Activated T-helper 2 cell treated with anti-CD3 and anti-CD28 coated beads, Interferon-gamma antibody, Interleukin-2, Interleukin-4, amounts not matched to agents 10 μg/mL and 5 μg/mL and 100 μg/mL, durations not matched to agents 14 hours and 24 hours and 36 hours (primary cell): ENCODE measurements at regions of chr14 and their contacts with region 1.

Region 1: GRCh38 chr14:24806061-24806678 is 172.2 kb upstream of the GZMB start:
- DNase-seq: no peak
- H3K4me3 Mint-ChIP-seq: no peak overlapping the region
- H3K27ac Mint-ChIP-seq: no peak overlapping the region
- H3K4me1 Mint-ChIP-seq: no peaks in the 10 kb centered on the region
- H3K27me3 Mint-ChIP-seq: peaks cover 10% of the 10 kb centered on the region

Region 2: DNA sequence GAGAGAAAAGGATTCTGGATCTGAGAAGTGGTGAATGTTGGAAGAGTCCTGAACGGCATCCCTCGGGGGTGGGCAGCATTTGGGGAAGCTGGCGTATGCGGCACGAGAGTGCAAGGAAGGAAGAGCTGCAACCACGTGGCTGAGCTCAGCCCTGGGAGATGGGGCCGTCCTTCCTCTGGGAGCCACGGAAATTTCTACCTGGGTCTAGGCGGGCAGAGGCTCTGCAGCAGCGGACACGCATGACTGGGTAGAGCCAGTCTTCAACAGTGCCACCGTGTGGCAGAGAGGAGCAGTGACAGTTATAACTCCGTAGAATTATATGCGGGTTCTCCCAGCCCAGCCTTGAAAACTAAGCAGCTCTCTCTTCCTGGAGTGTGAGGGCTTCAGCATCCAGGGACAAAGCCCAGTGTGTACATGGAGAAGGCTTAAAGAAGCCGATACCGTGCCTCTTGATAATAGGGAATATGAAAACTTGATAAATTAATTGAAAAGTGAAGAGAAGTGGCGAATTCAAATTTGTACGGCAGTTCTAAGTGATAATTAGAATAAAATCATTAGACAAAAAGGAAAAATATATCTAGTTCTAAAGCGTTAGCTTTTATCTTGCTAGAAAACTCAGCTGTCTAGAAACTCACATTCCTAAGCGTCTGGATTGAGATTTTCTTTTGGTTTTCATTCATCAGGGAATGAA is 326.7 kb after region 1 on chr14:
- intact Hi-C with region 1: loop called (anchors 1 kb)
- DNase-seq: peak; percentile 27
- H3K4me3 Mint-ChIP-seq: no peak overlapping the region
- H3K27ac Mint-ChIP-seq: no peak overlapping the region
- H3K4me1 Mint-ChIP-seq: no peaks in the 10 kb centered on the region
- H3K27me3 Mint-ChIP-seq: peaks cover 20% of the 10 kb centered on the region

Region 3: GRCh38 chr14:25400607-25401206 is 594.5 kb after region 1 on chr14:
- intact Hi-C with region 1: loop called (anchors 10 kb)
- DNase-seq: peak; percentile 11
- H3K4me3 Mint-ChIP-seq: no peak overlapping the region
- H3K27ac Mint-ChIP-seq: no peak overlapping the region
- H3K4me1 Mint-ChIP-seq: peaks cover 11% of the 10 kb centered on the region
- H3K27me3 Mint-ChIP-seq: no peaks in the 10 kb centered on the region